PC-9 (cell line): ENCODE measurements at regions of chr4 and their contacts with region 1.

Region 1: DNA sequence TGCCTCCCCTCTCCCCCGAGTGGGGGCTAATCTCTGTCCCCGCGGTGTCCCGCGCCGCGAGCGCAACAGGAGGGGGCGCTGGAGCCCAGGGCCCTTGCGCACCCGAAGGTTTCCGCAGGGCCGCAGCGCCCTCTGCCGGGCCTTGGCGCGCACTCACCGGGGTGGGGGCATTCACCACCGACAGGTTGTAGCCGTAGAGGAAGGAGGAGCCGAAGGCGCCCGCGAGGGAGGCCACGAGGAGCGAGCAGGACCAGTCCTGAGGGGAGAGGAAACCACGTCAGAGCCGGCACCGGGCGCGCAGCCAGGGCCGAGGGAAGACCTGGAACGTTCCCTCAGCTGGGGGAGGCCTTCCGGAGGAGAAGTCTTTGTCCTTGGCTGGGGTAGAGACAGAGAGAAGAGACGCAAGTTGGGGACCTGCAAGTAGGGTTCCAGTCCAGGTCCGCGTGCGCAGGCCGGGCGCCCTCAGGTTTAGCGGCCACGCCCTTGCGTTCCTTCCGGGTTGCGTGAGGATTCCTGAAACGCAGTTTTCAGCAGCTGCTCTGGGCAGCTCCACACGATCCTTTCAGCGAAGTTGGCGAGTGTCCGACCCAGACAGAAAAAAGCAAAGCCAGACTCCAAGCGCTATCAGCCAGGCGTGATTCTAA is 2.4 kb downstream of the SLC2A9 start:
- DNase-seq: peak; percentile 68 to 90
- H3K4me3 ChIP-seq: peak overlapping the region; percentile 33; the same call in 1 of the 2 replicates
- H3K27ac ChIP-seq: no peak overlapping the region
- H3K4me1 ChIP-seq: no peaks in the 10 kb centered on the region
- H3K27me3 ChIP-seq: no peaks in the 10 kb centered on the region
- CTCF ChIP-seq: peak; percentile 84

Region 2: GRCh38 chr4:9762823-9763475 is 256.0 kb before region 1 on chr4:
- CTCF ChIA-PET with region 1: interaction called, 4 read pairs
- POLR2A ChIA-PET with region 1: no interaction called
- intact Hi-C with region 1: loop called (anchors 1 kb)
- DNase-seq: peak; percentile 31 to 52
- H3K4me3 ChIP-seq: no peak overlapping the region
- H3K27ac ChIP-seq: no peak overlapping the region
- H3K4me1 ChIP-seq: no peaks in the 10 kb centered on the region
- H3K27me3 ChIP-seq: 0 out of 2 replicates have a peak, but pooled peaks cover 2% of the 10 kb centered on the region
- CTCF ChIP-seq: peak; percentile 68

Region 3: GRCh38 chr4:10063544-10064300 is 44.8 kb after region 1 on chr4:
- CTCF ChIA-PET with region 1: no interaction called
- POLR2A ChIA-PET with region 1: no interaction called
- intact Hi-C with region 1: loop called (anchors 1 kb)
- DNase-seq: peak; percentile 35 to 44
- H3K4me3 ChIP-seq: no peak overlapping the region
- H3K27ac ChIP-seq: no peak overlapping the region
- H3K4me1 ChIP-seq: no peaks in the 10 kb centered on the region
- H3K27me3 ChIP-seq: no peaks in the 10 kb centered on the region
- CTCF ChIP-seq: peak; percentile 49

Region 4: DNA sequence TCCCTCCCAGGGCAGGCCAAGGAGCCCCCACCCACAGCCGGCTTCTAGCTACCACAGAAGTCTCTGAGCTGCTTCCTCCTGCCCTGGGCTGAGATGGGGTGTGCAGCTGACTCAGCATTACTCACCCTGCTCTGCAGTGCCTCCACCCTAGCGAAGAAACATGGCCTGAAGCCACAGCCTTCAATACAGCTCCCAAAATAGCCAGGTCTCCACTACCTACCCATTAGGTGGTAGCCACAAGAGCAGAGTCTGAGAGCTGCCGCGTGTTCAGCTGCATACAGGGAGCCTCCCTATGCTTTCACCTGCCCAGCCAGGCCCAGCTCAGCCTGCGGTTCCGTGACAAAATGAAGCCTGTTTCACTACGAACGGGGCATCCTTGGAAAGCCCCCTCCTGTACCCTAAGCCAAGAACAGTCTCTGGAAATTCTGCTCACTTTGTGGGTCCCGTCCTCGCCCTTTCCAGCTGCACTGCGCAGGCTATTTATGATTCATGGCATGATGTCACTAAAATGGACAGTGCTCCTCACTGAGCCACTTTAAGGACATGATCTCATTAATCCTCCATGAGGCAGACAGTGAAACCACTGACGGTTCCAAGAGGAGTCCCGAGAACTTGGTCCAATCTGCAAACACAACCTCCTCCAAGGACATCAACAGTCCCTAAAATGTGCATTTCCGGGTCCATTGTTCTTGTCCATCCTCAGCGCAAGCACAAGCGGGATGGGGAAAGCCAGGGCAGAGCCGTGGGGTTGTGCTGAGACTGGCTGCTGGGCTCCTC is 77.4 kb after region 1 on chr4:
- CTCF ChIA-PET with region 1: no interaction called
- POLR2A ChIA-PET with region 1: no interaction called
- intact Hi-C with region 1: loop called (anchors 1 kb)
- DNase-seq: peak; percentile 81 to 90
- H3K4me3 ChIP-seq: no peak overlapping the region
- H3K27ac ChIP-seq: peak overlapping the region; percentile 71
- H3K4me1 ChIP-seq: peaks cover 39% of the 10 kb centered on the region
- H3K27me3 ChIP-seq: no peaks in the 10 kb centered on the region
- CTCF ChIP-seq: no peak

Region 5: GRCh38 chr4:10116580-10117358 is 97.8 kb after region 1 on chr4 and contains the start of gene WDR1:
- CTCF ChIA-PET with region 1: no interaction called
- POLR2A ChIA-PET with region 1: no interaction called
- intact Hi-C with region 1: loop called (anchors 5 kb)
- DNase-seq: peak; percentile 82 to 95
- H3K4me3 ChIP-seq: peak within 1 kb of the TSS; percentile 81
- H3K27ac ChIP-seq: peak within 1 kb of the TSS; percentile 61
- H3K4me1 ChIP-seq: peaks cover 10% of the 10 kb centered on the region
- H3K27me3 ChIP-seq: no peaks in the 10 kb centered on the region
- CTCF ChIP-seq: no peak
- total RNA-seq, gene WDR1: 251 and 258 TPM in 2 replicates

Region 6: DNA sequence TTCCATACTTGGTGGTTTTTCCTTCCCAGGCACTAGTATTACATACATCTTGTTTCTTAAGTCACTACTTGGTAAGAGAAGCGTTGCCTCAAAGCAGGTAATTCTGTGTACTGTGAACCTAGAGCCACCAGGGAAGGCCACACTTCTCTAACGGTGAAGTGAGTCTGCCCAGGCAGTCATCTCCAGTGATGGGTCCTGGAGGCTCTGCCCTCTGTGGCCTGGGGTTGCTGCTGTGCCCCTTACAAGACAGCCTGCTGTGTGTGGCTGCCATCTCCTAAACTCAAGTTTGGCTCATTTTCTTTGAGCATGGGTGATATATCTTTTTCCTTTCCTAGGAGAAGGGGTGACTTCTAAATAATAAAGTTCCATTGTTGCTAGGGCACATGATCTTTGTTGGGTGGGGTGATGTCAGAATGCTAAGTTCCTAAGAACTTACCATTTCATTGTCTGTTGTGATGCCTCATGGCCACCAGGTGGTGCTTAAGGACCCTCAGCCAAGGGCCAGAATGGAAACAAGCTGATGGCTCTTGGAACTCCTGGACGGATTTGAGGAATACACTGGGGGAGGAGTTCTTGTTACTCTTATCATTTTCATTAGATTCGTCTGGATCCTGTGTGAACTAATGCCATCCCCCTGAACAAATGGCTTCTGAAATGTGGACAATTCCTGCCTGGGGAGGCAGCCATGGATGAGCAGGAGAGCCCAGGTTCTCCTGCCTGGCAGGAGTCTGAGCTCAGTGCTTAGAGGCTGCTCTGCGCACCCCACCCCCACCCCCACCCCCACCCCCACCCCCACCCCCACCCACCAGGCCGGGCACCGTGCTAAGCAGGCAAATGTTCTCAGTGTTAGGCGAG is 138.8 kb after region 1 on chr4:
- CTCF ChIA-PET with region 1: no interaction called
- POLR2A ChIA-PET with region 1: no interaction called
- intact Hi-C with region 1: no loop called
- DNase-seq: peak; percentile 16 to 45
- H3K4me3 ChIP-seq: no peak overlapping the region
- H3K27ac ChIP-seq: no peak overlapping the region
- H3K4me1 ChIP-seq: no peaks in the 10 kb centered on the region
- H3K27me3 ChIP-seq: peaks cover 4% of the 10 kb centered on the region
- CTCF ChIP-seq: peak; percentile 78

Region 7: GRCh38 chr4:10403633-10404445 is 384.9 kb after region 1 on chr4:
- CTCF ChIA-PET with region 1: no interaction called
- POLR2A ChIA-PET with region 1: no interaction called
- intact Hi-C with region 1: loop called (anchors 5 kb)
- DNase-seq: peak in 1 of 2 experiments; percentile 6
- H3K4me3 ChIP-seq: no peak overlapping the region
- H3K27ac ChIP-seq: no peak overlapping the region
- H3K4me1 ChIP-seq: no peaks in the 10 kb centered on the region
- H3K27me3 ChIP-seq: no peaks in the 10 kb centered on the region; the same call in 1 of the 2 replicates
- CTCF ChIP-seq: peak; percentile 54

Region 8: GRCh38 chr4:10530137-10530786 is 511.3 kb after region 1 on chr4:
- CTCF ChIA-PET with region 1: no interaction called
- POLR2A ChIA-PET with region 1: no interaction called
- intact Hi-C with region 1: loop called (anchors 10 kb)
- DNase-seq: no peak
- H3K4me3 ChIP-seq: no peak overlapping the region
- H3K27ac ChIP-seq: no peak overlapping the region
- H3K4me1 ChIP-seq: no peaks in the 10 kb centered on the region
- H3K27me3 ChIP-seq: no peaks in the 10 kb centered on the region; the same call in 1 of the 2 replicates
- CTCF ChIP-seq: no peak

Region 9: DNA sequence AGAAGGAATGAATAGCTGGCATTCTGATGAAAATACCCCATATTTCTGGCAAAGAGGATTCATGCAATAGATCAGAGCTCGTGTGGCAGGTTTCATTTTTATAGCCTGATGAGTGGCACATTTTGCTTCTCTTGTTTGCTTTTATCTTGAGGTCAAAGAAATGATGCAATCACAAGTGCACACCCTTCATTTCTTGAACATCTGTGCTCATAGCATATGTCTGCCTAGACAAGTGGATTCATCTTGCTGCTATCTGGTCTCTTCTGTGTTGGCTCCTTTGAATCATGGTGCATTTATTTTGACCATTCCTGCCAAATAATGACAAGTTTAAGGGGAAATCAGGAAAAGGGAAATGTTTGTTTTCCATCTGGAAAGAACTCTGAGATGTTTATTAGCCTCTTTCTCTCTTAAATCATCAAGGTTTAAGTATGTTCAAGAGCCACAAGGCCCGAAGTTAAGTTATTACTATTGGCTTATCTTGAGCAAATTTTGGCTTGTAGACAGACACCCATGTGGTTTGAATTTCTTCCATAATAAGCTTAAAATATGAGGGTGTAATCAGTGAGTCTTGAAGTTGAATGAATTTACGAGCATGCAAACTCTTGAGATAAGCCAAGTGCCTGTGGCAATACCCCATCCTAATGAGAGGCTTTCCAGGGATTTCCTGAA is 1469.1 kb after region 1 on chr4:
- CTCF ChIA-PET with region 1: no interaction called
- POLR2A ChIA-PET with region 1: no interaction called
- intact Hi-C with region 1: no loop called
- DNase-seq: peak in 1 of 2 experiments; percentile 58
- H3K4me3 ChIP-seq: no peak overlapping the region
- H3K27ac ChIP-seq: no peak overlapping the region
- H3K4me1 ChIP-seq: peaks cover 13% of the 10 kb centered on the region
- H3K27me3 ChIP-seq: no peaks in the 10 kb centered on the region
- CTCF ChIP-seq: no peak

Region 10: GRCh38 chr4:11640584-11640983 is 1621.6 kb after region 1 on chr4:
- CTCF ChIA-PET with region 1: no interaction called
- POLR2A ChIA-PET with region 1: no interaction called
- intact Hi-C with region 1: no loop called
- DNase-seq: no peak
- H3K4me3 ChIP-seq: no peak overlapping the region
- H3K27ac ChIP-seq: no peak overlapping the region
- H3K4me1 ChIP-seq: peaks cover 22% of the 10 kb centered on the region
- H3K27me3 ChIP-seq: no peaks in the 10 kb centered on the region
- CTCF ChIP-seq: no peak